Breast epithelium (tissue), 4 donors: ENCODE measurements at regions of chr3 and their contacts with region 1.

Region 1: DNA sequence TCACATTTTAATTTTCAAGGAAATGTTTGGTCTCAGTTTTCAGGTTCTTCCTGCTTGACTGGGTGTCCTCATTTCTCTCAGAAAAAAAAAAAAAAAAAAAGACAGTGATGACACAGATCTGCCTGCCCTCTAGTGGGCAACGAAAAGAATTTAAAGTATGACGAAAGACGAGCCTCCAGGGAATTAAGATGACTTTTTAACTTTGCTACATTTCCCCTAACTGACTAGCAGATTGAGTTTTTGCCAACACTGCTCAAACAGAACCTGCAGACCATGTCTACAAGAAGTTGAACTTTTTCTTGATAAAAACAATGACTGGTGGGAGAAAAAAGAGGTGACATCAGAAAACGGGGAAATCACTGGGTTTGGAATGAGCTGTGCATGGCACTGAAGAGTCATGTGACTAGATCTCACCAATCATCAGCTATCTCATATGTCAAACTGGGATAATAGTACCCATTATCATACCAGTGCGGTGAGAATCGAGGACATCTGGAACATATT is 40.8 kb downstream of the EOMES start:
- DNase-seq: no peak
- H3K4me3 ChIP-seq: no peak overlapping the region
- H3K27ac ChIP-seq: peak overlapping the region; percentile 49 to 88
- H3K4me1 ChIP-seq: no peaks in the 10 kb centered on the region
- H3K27me3 ChIP-seq: no peaks in the 10 kb centered on the region
- CTCF ChIP-seq: peak; percentile 74 to 88 (median 84)
- POLR2A ChIP-seq: no peak

Region 2: GRCh38 chr3:25831578-25831977 is 1849.7 kb before region 1 on chr3:
- intact Hi-C with region 1: loop called (anchors 10 kb)
- DNase-seq: no peak
- H3K4me3 ChIP-seq: no peak overlapping the region
- H3K27ac ChIP-seq: no peak overlapping the region
- H3K4me1 ChIP-seq: no peaks in the 10 kb centered on the region
- H3K27me3 ChIP-seq: no peaks in the 10 kb centered on the region
- CTCF ChIP-seq: no peak
- POLR2A ChIP-seq: no peak

Region 3: GRCh38 chr3:27699067-27699466 is 17.8 kb after region 1 on chr3:
- intact Hi-C with region 1: no loop called
- DNase-seq: no peak
- H3K4me3 ChIP-seq: no peak overlapping the region
- H3K27ac ChIP-seq: no peak overlapping the region
- H3K4me1 ChIP-seq: no peaks in the 10 kb centered on the region
- H3K27me3 ChIP-seq: no peaks in the 10 kb centered on the region
- CTCF ChIP-seq: no peak
- POLR2A ChIP-seq: no peak

Region 4: DNA sequence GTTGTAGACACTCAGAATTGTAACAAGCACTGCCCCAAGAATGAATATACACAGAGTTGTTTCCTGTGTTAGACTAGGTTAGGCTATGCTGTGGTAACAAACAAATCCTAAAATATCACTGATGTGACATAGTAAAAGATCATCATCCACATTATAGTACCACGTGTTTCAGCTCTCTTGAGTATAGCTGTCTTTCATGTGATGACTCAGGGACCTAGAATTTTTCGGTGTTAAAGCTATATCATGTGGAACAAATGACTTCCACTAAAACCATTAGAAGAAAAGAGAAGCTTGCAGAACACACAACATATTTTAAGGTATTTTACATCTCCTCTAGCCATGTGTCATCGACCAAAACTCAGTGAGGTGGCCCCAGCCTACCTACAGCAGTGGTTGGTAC is 1291.6 kb after region 1 on chr3:
- intact Hi-C with region 1: no loop called
- DNase-seq: no peak
- H3K4me3 ChIP-seq: no peak overlapping the region
- H3K27ac ChIP-seq: no peak overlapping the region
- H3K4me1 ChIP-seq: no peaks in the 10 kb centered on the region
- H3K27me3 ChIP-seq: no peaks in the 10 kb centered on the region
- CTCF ChIP-seq: no peak
- POLR2A ChIP-seq: no peak